HCT116 (cell line): ENCODE measurements at regions of chr13 and their contacts with region 1.

Region 1: GRCh38 chr13:91078093-91078679 is 269.3 kb upstream of the MIR17HG start:
- DNase-seq: no peak
- ATAC-seq: no peak
- H3K4me3 ChIP-seq: no peak overlapping the region
- H3K27ac ChIP-seq: no peak overlapping the region
- H3K4me1 ChIP-seq: no peaks in the 10 kb centered on the region
- H3K27me3 ChIP-seq: no peaks in the 10 kb centered on the region
- CTCF ChIP-seq: peak in 2 of 3 experiments; percentile 22 to 55; a peak in 3 of 6 replicates
- POLR2A ChIP-seq: no peak
- RAD21 ChIP-seq: no peak

Region 2: DNA sequence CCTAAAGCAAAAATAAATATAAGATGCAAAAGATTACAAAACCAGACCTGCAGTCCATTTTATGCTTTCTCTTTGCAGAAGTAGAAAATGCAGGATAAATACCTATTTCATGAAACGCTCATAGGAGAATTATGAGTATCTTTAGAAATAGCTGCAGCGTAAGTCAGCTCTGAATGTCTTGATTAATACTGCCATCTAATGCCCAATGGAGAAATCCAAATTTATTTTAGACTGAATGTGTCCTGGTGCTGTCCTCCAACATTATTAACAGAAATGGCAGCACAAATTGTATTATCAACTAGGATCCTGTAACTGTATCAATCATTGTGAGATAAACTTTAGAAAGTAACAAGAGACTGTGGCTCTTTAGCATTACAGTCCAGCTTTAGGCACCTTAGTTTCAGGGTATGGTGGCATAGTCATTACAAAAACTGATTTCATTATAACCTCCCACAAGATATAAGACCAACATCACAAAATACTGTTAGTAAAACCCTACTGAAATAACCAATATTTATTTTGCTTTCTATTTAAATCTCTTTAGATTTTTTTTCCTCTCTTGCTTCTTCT is 107.2 kb after region 1 on chr13:
- CTCF ChIA-PET with region 1: interaction called, 19 read pairs
- POLR2A ChIA-PET with region 1: no interaction called
- RAD21 ChIA-PET with region 1: no interaction called
- intact Hi-C with region 1: no loop called
- DNase-seq: peak; percentile 7
- ATAC-seq: no peak
- H3K4me3 ChIP-seq: no peak overlapping the region
- H3K27ac ChIP-seq: no peak overlapping the region
- H3K4me1 ChIP-seq: no peaks in the 10 kb centered on the region
- H3K27me3 ChIP-seq: peaks cover 4% of the 10 kb centered on the region
- CTCF ChIP-seq: peak in 1 of 3 experiments; percentile 31; a peak in 1 of 6 replicates
- POLR2A ChIP-seq: no peak
- RAD21 ChIP-seq: peak; percentile 33; the same call in 1 of the 2 replicates

Region 3: DNA sequence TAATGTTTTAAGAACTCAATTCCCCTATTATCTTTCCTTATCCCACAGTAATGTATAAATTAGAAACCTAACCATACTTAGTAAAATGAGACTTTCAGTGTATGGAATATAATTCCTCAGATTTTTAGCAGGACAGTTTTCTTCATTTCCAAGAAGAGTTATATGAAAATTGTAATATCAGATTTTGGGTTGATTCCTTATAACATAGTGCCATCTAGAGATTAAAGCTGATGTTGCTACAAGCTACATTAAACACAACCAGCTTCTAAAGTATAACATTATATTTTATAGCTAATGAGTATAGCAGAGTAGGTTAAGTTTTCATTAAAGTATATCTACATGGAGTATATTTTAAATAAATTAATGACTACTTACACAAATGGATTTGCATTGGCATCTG is 169.6 kb after region 1 on chr13:
- CTCF ChIA-PET with region 1: interaction called, 33 read pairs
- POLR2A ChIA-PET with region 1: no interaction called
- RAD21 ChIA-PET with region 1: interaction called in 1 of 2 experiments, 3 read pairs
- intact Hi-C with region 1: no loop called
- DNase-seq: no peak
- ATAC-seq: no peak
- H3K4me3 ChIP-seq: no peak overlapping the region
- H3K27ac ChIP-seq: no peak overlapping the region
- H3K4me1 ChIP-seq: no peaks in the 10 kb centered on the region
- H3K27me3 ChIP-seq: peaks cover 6% of the 10 kb centered on the region
- CTCF ChIP-seq: peak in 1 of 3 experiments; percentile 26; a peak in 1 of 6 replicates
- POLR2A ChIP-seq: no peak
- RAD21 ChIP-seq: peak; percentile 37

Region 4: GRCh38 chr13:91417660-91418325 is 339.6 kb after region 1 on chr13:
- CTCF ChIA-PET with region 1: no interaction called
- POLR2A ChIA-PET with region 1: no interaction called
- RAD21 ChIA-PET with region 1: no interaction called
- intact Hi-C with region 1: no loop called
- DNase-seq: no peak
- ATAC-seq: no peak
- H3K4me3 ChIP-seq: no peak overlapping the region
- H3K27ac ChIP-seq: no peak overlapping the region
- H3K4me1 ChIP-seq: no peaks in the 10 kb centered on the region
- H3K27me3 ChIP-seq: no peaks in the 10 kb centered on the region
- CTCF ChIP-seq: no peak
- POLR2A ChIP-seq: no peak
- RAD21 ChIP-seq: no peak